CD14-positive monocyte (primary cell): ENCODE measurements at regions of chr1 and their contacts with region 1.

Region 1: GRCh38 chr1:22704440-22705067 is 6.1 kb upstream of the EPHB2 start:
- DNase-seq: peak; percentile 81 to 87 (median 85)
- H3K4me3 ChIP-seq: no peak overlapping the region
- H3K4me3 Mint-ChIP-seq: no peak overlapping the region
- H3K27ac ChIP-seq: no peak overlapping the region
- H3K27ac Mint-ChIP-seq: peak overlapping the region in 1 of 7 donors; percentile 13
- H3K4me1 ChIP-seq: peaks cover 20 to 35% of the 10 kb centered on the region in 2 donors
- H3K4me1 Mint-ChIP-seq: peaks cover 28% of the 10 kb centered on the region
- H3K27me3 ChIP-seq: peaks cover 0 to 1% of the 10 kb centered on the region in 2 donors
- H3K27me3 Mint-ChIP-seq: peaks cover under 1 to 9% (median 7%) of the 10 kb centered on the region in 3 donors
- CTCF ChIP-seq: peak; percentile 91

Region 2: DNA sequence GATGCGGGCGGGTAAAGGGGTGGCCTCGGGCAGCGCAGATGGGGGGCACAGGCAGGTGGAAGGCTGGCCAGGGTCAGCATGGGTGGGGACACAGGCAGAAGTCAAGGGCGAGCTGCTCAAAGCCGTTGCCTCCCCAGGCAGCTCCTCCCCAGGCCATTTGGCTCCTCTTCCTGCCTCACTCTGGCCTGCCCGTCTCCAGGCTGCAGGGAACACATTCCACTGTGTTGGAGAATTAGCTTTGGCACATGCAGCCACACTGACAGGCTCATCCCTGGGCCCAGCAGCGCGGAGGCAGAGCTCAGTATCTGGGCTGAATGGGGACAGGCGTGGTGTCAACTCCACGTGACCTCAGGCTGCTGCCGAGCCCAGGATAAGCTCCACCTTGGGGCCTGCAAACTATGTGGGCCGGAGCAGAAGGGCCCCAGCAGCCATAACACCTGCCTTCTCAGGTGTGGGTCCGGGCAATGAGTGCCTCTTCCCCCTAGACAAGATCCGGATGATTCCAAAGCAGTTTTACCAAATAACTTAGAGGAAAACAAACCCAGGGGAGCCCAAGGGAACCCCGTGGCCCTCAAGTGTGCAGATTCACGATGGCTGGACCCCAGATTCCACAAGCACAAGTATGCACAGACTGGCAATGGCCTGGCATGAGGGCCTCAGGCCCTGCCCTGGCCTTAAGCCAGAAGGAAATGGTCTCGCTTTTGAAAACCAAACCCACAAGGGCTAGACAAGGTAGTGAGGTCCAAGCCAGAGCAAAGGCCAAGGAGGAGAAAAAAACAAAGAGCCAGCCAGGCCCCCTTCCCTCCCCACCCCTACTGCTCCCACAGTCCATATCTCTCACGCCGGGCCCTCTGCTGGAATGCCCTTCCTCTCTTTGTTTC is 807.7 kb before region 1 on chr1:
- intact Hi-C with region 1: no loop called
- DNase-seq: no peak
- H3K4me3 ChIP-seq: no peak overlapping the region
- H3K4me3 Mint-ChIP-seq: no peak overlapping the region
- H3K27ac ChIP-seq: no peak overlapping the region
- H3K27ac Mint-ChIP-seq: peak overlapping the region in 1 of 7 donors; percentile 26
- H3K4me1 ChIP-seq: no peaks in the 10 kb centered on the region
- H3K4me1 Mint-ChIP-seq: no peaks in the 10 kb centered on the region
- H3K27me3 ChIP-seq: no peaks in the 10 kb centered on the region
- H3K27me3 Mint-ChIP-seq: peaks cover 1 to 6% (median 3%) of the 10 kb centered on the region in 3 donors
- CTCF ChIP-seq: no peak

Region 3: DNA sequence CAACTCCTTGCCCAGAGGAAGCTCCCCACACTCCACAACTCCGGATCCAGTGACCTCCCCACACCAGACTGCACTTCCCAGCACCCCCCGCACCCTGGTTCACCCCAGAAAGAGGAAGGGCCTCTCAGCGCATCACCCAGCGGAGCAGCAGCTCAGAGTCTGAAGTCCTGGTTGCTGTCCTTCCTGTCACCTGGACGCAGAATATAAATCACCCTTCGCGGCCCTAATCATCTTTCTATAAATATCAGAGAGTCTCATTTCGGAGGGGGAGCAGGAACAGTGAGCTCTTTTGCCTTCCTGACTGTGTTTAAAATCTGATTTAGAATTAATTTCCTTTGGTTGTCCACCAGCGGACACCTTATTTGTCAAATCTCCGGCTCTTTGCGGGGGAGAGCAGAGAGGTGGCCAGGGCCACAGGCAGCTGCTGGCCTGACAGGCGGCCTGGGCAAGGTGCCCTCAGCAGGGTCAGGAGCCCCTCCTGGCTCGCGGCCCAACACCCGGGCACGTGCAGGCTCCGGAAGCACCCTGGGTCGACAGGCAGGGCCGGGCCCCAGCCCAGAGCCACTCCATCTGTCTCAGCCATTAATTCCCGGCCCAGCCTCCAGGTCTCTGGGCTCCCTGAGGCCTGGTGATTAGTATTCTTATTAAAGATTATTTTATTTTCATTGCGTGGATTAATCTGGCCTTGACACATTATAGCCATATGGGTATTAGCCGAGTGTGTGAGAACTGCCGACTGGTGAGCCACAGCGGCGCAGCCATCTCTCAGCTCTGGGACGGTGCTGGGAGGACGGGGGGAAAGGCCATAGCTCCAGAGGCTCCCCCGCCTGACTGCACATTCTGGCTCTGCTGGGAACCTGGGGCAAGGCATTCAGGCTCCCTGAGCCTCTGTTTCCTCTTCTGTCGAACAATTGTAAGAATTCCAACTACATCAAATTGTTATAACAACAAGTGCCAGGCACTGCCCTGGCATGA is 121.6 kb before region 1 on chr1:
- intact Hi-C with region 1: no loop called
- DNase-seq: no peak
- H3K4me3 ChIP-seq: no peak overlapping the region
- H3K4me3 Mint-ChIP-seq: no peak overlapping the region
- H3K27ac ChIP-seq: no peak overlapping the region
- H3K27ac Mint-ChIP-seq: no peak overlapping the region
- H3K4me1 ChIP-seq: no peaks in the 10 kb centered on the region
- H3K4me1 Mint-ChIP-seq: no peaks in the 10 kb centered on the region
- H3K27me3 ChIP-seq: no peaks in the 10 kb centered on the region
- H3K27me3 Mint-ChIP-seq: peaks cover 0 to 4% (median 2%) of the 10 kb centered on the region in 3 donors
- CTCF ChIP-seq: no peak

Region 4: GRCh38 chr1:22749919-22750688 is 45.5 kb after region 1 on chr1:
- intact Hi-C with region 1: loop called in 1 of 2 experiments (anchors 5 kb)
- DNase-seq: peak; percentile 83 to 93 (median 90)
- H3K4me3 ChIP-seq: peak overlapping the region in 1 of 3 experiments; percentile 19
- H3K4me3 Mint-ChIP-seq: peak overlapping the region in 1 of 2 donors; percentile 78
- H3K27ac ChIP-seq: peak overlapping the region; percentile 94 to 97
- H3K27ac Mint-ChIP-seq: peak overlapping the region; percentile 95 to 99 (median 99)
- H3K4me1 ChIP-seq: peaks cover 51 to 58% of the 10 kb centered on the region in 2 donors
- H3K4me1 Mint-ChIP-seq: peaks cover 51% of the 10 kb centered on the region
- H3K27me3 ChIP-seq: no peaks in the 10 kb centered on the region
- H3K27me3 Mint-ChIP-seq: peaks cover 0 to 5% (median 2%) of the 10 kb centered on the region in 3 donors
- CTCF ChIP-seq: no peak

Region 5: GRCh38 chr1:22763487-22764200 is 59.1 kb after region 1 on chr1:
- intact Hi-C with region 1: no loop called
- DNase-seq: no peak
- H3K4me3 ChIP-seq: no peak overlapping the region
- H3K4me3 Mint-ChIP-seq: no peak overlapping the region
- H3K27ac ChIP-seq: no peak overlapping the region
- H3K27ac Mint-ChIP-seq: no peak overlapping the region
- H3K4me1 ChIP-seq: no peaks in the 10 kb centered on the region
- H3K4me1 Mint-ChIP-seq: no peaks in the 10 kb centered on the region
- H3K27me3 ChIP-seq: no peaks in the 10 kb centered on the region
- H3K27me3 Mint-ChIP-seq: peaks cover 1 to 8% (median 3%) of the 10 kb centered on the region in 3 donors
- CTCF ChIP-seq: no peak

Region 6: DNA sequence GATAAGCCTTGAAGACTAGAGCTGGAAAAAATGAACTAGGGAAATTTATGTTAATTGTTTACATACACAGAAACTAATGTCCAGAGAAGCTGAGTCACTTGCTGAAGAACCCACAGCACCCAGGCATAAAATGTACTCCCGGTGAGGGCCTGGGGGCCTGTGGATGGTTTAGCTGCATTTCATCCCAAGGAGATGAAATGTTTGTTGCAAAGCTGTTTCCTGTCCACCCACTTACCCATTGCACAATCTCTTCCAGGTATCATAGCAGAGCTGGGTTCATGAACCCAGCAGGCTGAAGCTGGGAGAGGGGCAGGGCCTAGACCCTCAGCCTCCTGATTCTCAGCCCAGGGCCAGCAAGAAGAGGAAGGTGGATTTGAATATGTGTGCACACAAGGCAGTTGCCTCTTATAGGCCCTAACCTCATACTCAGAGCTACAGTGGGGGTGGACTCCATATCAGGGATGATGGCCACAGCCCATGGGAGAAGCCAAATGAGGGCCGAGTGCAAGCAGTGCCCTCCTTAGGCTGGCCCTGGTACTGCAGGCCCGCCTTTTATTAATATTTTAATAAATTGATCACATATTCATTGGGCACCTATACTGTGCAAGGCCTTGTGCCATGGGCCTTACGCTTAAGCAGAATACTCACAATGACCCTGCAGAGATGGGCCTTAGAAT is 157.3 kb after region 1 on chr1:
- intact Hi-C with region 1: loop called in 1 of 2 experiments (anchors 10 kb)
- DNase-seq: peak in 1 of 3 donors; percentile 14
- H3K4me3 ChIP-seq: no peak overlapping the region
- H3K4me3 Mint-ChIP-seq: no peak overlapping the region
- H3K27ac ChIP-seq: no peak overlapping the region
- H3K27ac Mint-ChIP-seq: no peak overlapping the region
- H3K4me1 ChIP-seq: no peaks in the 10 kb centered on the region
- H3K4me1 Mint-ChIP-seq: peaks cover 4% of the 10 kb centered on the region
- H3K27me3 ChIP-seq: no peaks in the 10 kb centered on the region
- H3K27me3 Mint-ChIP-seq: peaks cover 0 to 2% (median 2%) of the 10 kb centered on the region in 3 donors
- CTCF ChIP-seq: peak; percentile 74

Region 7: GRCh38 chr1:22889213-22889827 is 184.8 kb after region 1 on chr1:
- intact Hi-C with region 1: loop called in 1 of 2 experiments (anchors 5 kb)
- DNase-seq: peak in 1 of 3 donors; percentile 3
- H3K4me3 ChIP-seq: no peak overlapping the region
- H3K4me3 Mint-ChIP-seq: no peak overlapping the region
- H3K27ac ChIP-seq: no peak overlapping the region
- H3K27ac Mint-ChIP-seq: no peak overlapping the region
- H3K4me1 ChIP-seq: peaks cover 0 to 8% of the 10 kb centered on the region in 2 donors
- H3K4me1 Mint-ChIP-seq: peaks cover 11% of the 10 kb centered on the region
- H3K27me3 ChIP-seq: no peaks in the 10 kb centered on the region
- H3K27me3 Mint-ChIP-seq: peaks cover 2 to 5% (median 5%) of the 10 kb centered on the region in 3 donors
- CTCF ChIP-seq: peak; percentile 74

Region 8: DNA sequence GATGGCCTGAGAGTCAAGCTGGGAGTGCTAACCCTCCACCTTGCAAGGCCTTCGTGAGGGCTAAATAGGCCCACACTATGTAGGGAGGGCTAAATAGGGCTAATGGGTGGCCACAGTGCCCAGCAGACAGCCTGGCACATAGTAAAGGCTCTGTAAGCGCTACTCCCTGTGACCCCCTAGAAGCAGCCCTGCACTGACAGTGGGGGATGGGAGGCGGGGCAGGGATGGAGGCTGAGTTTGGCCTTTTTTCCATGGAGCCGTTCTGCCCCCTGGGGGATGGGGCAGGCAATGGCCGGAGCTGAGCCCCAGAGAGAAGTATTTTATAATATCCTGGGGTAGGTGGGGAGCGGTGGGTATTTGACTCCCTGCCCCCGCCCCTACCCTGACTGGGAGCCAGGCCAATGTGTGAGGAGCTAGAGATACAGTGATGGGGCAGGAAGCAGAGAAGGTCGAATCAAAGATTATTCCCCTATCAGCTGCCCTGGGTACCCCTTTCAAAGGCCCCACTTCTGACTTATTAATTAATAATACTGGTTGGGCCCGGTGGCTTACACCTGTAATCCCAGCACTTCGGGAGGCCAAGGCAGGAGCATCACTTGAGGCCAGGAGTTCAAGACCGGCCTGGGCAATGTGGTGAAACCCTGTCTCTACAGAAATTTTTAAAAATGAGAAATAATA is 225.8 kb after region 1 on chr1:
- intact Hi-C with region 1: loop called in 1 of 2 experiments (anchors 10 kb)
- DNase-seq: peak in 1 of 3 donors; percentile 15
- H3K4me3 ChIP-seq: no peak overlapping the region
- H3K4me3 Mint-ChIP-seq: no peak overlapping the region
- H3K27ac ChIP-seq: no peak overlapping the region
- H3K27ac Mint-ChIP-seq: no peak overlapping the region
- H3K4me1 ChIP-seq: no peaks in the 10 kb centered on the region
- H3K4me1 Mint-ChIP-seq: no peaks in the 10 kb centered on the region
- H3K27me3 ChIP-seq: no peaks in the 10 kb centered on the region
- H3K27me3 Mint-ChIP-seq: peaks cover 7 to 12% (median 10%) of the 10 kb centered on the region in 3 donors
- CTCF ChIP-seq: peak; percentile 74